Breast epithelium (tissue), 4 donors: ENCODE measurements at regions of chr3 and their contacts with region 1.

Region 1: DNA sequence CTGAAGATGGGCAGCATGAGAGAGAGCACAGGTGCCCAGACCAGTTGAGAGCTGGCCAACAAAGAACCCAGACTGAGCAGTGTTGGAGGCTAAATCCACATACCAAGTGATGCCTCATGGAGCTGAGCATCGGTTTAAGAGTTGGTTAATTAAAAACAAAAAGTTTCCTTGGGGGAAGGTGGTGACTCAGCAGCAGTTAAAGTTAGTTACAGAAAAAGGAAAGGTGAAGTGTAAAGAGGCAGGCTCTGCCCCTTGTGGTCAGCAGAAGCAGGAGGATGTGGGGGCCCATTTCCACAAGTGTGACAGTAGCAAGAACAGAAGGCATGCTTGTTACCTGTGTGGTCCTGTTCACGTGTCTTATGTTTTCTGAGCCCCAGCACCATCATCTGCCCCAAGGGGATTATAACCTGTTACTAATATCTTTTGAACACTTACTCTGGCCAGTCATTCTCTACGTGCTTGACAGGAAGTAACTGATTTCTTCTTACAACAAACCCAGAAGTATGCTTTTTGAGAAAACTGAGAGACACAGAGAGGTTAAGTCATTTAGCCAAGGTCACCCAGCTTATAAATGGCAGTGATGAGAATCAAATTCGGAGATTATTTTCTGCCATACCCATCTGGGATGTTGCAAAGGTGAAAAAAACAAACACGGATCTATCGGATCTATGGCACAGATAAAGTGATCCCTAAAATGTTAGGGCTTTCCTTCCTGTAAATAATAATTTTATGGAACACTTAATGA is 91.0 kb downstream of the EPHB1 start:
- DNase-seq: no peak
- H3K4me3 ChIP-seq: no peak overlapping the region
- H3K27ac ChIP-seq: no peak overlapping the region
- H3K4me1 ChIP-seq: no peaks in the 10 kb centered on the region
- H3K27me3 ChIP-seq: no peaks in the 10 kb centered on the region
- CTCF ChIP-seq: no peak
- POLR2A ChIP-seq: no peak

Region 2: DNA sequence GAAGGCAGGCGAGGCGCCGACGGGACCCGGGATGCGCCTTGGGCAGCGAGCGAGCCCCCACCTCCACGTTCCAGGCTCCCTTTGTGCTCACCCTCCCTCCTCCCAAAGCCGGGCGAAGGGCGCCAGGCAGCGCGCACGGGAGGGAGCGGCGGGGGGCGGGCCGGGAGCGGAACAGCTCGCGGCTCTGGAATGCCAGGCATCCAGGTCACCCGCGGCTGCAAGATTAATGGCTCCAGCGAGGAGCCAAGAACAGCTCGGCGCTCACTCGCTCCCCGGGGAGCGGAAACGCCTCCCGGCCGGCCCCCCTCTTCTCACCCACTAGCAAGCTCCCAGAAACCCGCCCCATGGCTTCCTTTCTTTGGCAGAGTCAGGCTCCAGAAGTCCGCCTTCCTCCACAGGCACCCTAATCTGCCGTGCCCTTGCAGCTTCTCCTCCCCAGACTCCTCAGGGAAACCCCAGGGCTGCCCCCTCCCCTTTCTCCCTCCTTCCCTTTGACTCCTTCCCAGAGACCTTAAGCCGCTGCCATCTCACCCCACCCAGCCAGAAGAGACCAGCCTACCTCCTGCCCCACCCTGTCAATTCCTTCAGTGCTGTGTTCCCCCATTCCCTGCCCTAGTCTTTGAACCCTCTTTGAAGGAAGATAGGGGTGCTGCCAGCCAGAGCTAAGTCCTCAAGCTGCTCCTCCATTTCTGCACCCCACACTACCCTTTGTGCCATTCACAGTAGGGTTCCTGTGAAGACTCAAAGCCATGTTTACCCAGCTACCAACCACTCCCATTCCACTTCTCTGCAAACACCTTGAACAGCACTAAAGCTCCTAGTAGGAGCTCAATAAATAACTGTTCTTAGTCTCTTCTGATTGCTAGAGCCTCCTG is 521.8 kb before region 1 on chr3:
- intact Hi-C with region 1: loop called (anchors 5 kb)
- DNase-seq: peak; percentile 95 to 96
- H3K4me3 ChIP-seq: peak overlapping the region; percentile 25 to 57 (median 36)
- H3K27ac ChIP-seq: peak overlapping the region; percentile 97 to 100
- H3K4me1 ChIP-seq: peaks cover 25 to 39% of the 10 kb centered on the region in 2 donors
- H3K27me3 ChIP-seq: no peaks in the 10 kb centered on the region
- CTCF ChIP-seq: no peak
- POLR2A ChIP-seq: no peak